Activated CD8-positive, alpha-beta memory T cell treated with anti-CD3 and anti-CD28 coated beads, Interleukin-2, amount 10 ng/mL, durations not matched to agents 7 days and 5 days (primary cell): ENCODE measurements at regions of chr22 and their contacts with region 1.

Region 1: DNA sequence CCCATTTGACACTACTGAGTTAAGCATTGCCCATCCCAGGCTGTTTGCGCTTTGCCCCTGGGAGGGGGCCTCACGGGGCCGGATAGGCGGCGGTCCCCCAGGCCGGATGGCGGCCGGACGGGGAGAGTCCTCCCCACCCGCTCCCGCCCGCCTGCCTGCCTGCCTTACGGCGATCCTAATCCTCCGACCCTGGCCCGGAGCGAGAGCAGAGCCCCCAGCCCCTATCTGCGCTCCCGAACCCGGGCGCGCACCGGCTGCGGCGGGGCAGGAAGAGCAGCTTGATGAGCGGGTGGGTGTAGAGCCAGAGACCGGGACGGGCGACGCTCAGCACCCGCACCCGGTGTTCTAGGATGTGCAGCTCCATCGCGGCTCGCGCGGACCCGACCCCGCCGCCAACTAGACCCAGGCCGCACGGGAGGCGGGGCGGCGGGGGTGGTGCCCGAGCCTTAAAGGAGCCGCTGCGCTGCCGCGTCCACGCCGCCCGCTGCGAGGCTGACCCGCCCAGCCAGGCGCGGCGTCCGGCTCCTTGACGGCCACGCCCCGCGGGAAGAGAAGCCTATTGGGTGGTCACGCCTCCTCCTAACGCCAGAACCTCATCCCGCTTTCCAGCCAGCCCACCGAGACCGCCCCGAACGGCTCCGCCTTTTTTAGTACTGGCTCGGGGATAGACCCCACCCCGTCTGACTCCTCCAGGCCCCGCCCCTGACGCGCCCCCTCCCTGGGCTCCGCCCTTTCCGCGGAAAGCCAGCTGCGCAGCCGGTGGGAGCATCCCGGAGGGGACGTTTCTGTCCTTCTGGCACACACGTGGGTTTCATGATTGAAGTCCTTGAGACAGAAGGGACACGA is at the start of gene CASTOR1:
- DNase-seq: peak; percentile 96
- ATAC-seq: peak; percentile 86
- H3K4me3 Mint-ChIP-seq: peak within 1 kb of the TSS; percentile 74
- H3K27ac Mint-ChIP-seq: peak within 1 kb of the TSS; percentile 83
- H3K4me1 Mint-ChIP-seq: peaks cover 51% of the 10 kb centered on the region
- H3K27me3 Mint-ChIP-seq: no peaks in the 10 kb centered on the region
- total RNA-seq, gene CASTOR1: 8.7 to 10.2 TPM

Region 2: GRCh38 chr22:30114361-30114760 is 175.0 kb before region 1 on chr22:
- CTCF ChIA-PET with region 1: interaction called, 119 read pairs
- DNase-seq: no peak
- ATAC-seq: no peak
- H3K4me3 Mint-ChIP-seq: no peak overlapping the region
- H3K27ac Mint-ChIP-seq: no peak overlapping the region
- H3K4me1 Mint-ChIP-seq: peaks cover 37% of the 10 kb centered on the region
- H3K27me3 Mint-ChIP-seq: no peaks in the 10 kb centered on the region

Region 3: DNA sequence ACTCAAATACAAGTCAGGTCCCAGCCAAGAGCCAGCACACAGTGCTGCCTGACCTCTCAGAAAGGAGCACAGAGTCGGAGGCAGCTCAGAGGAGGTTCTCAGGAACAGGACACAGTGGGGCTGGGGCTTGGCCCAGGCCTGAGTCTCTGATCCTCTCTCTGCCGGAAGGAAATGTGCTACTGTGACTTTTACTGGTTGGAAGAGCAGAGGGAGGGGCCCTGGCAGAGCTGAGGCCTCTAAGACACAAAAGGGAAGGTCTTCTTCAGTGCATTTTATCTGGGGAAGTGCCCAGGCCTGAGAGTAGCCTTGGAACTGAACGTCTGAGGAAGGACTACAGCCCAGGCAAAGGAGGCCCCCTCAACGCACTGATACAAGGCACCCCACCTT is 16.2 kb after region 1 on chr22:
- CTCF ChIA-PET with region 1: interaction called, 167 read pairs
- DNase-seq: peak; percentile 83
- ATAC-seq: peak; percentile 84
- H3K4me3 Mint-ChIP-seq: peak overlapping the region; percentile 74
- H3K27ac Mint-ChIP-seq: peak overlapping the region; percentile 88
- H3K4me1 Mint-ChIP-seq: peaks cover 96% of the 10 kb centered on the region
- H3K27me3 Mint-ChIP-seq: no peaks in the 10 kb centered on the region

Region 4: DNA sequence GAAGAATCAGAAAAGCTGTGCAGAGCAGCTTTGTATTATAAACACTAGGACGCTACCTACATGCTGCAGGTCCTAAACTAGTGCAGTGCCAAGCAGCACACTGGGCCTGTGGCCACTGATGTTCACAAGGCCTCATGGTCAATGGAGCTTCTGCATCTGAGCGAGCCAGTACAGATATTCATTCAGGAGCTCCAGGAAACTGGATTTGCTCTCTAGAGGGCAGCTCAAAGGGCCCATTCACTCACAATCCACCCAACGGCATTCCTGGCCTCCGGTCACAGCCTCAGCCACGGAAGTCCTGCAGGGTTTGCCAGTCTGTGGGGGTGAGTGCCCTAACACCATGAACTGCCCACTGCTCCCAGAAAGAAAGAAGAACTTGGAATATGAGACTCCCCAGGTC is 43.2 kb after region 1 on chr22:
- CTCF ChIA-PET with region 1: interaction called, 81 read pairs
- DNase-seq: no peak
- ATAC-seq: no peak
- H3K4me3 Mint-ChIP-seq: no peak overlapping the region
- H3K27ac Mint-ChIP-seq: peak overlapping the region; percentile 47
- H3K4me1 Mint-ChIP-seq: peaks cover 32% of the 10 kb centered on the region
- H3K27me3 Mint-ChIP-seq: no peaks in the 10 kb centered on the region

Region 5: GRCh38 chr22:30386960-30387827 is 97.8 kb after region 1 on chr22 and contains the start of gene RNF215:
- CTCF ChIA-PET with region 1: interaction called, 508 read pairs
- DNase-seq: peak; percentile 82
- ATAC-seq: peak; percentile 91
- H3K4me3 Mint-ChIP-seq: peak within 1 kb of the TSS; percentile 76
- H3K27ac Mint-ChIP-seq: peak within 1 kb of the TSS; percentile 78
- H3K4me1 Mint-ChIP-seq: peaks cover 22% of the 10 kb centered on the region
- H3K27me3 Mint-ChIP-seq: no peaks in the 10 kb centered on the region
- total RNA-seq, gene RNF215: 8.5 to 10.5 TPM

Region 6: GRCh38 chr22:30485362-30485988 is 196.1 kb after region 1 on chr22:
- CTCF ChIA-PET with region 1: interaction called, 13 read pairs
- DNase-seq: peak; percentile 81
- ATAC-seq: peak; percentile 100
- H3K4me3 Mint-ChIP-seq: no peak overlapping the region
- H3K27ac Mint-ChIP-seq: peak overlapping the region; percentile 18
- H3K4me1 Mint-ChIP-seq: peaks cover 3% of the 10 kb centered on the region
- H3K27me3 Mint-ChIP-seq: peaks cover 3% of the 10 kb centered on the region